Aorta (tissue), 5 donors: ENCODE measurements at regions of chr19 and their contacts with region 1.

Region 1: DNA sequence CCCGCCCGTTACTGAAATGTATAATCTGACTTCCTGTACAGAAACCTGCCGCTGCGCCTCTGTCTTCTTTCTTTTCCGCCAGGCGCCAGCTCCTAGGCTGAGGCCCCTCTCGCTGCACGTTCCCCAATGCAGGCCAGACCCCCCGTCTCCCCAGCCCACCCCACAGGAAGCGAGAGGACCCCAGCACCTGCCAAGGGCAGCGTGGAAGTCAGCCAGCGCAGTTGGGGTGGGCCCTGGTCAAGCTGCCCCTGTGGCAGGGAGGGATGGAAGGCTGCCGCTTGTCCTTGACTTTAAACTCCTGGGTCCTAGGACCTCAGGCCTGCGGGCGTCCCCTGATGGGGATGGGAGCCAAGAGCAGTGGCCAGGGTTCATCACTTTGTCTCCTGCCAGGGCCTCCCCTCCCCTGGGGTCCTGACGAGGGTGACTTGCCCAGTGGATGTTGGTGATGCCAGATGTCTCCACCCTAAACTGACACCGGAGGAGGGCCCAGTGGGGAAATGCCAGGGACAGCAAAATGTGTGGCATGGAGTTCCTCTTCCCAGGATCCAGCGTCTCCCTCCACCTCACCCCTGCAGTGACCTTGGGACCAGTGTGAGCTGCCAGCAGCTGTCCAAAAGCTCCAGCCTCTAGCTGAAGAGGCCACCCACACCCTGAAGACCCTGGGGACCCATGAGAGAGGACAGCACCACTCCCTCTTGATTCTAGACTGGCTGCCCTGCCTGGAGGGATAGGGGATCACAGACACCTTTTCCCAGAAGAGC is 8.5 kb upstream of the MARCHF2 start:
- DNase-seq: no peak
- ATAC-seq: no peak
- H3K4me3 ChIP-seq: no peak overlapping the region
- H3K27ac ChIP-seq: no peak overlapping the region
- H3K4me1 ChIP-seq: no peaks in the 10 kb centered on the region
- H3K27me3 ChIP-seq: no peaks in the 10 kb centered on the region

Region 2: DNA sequence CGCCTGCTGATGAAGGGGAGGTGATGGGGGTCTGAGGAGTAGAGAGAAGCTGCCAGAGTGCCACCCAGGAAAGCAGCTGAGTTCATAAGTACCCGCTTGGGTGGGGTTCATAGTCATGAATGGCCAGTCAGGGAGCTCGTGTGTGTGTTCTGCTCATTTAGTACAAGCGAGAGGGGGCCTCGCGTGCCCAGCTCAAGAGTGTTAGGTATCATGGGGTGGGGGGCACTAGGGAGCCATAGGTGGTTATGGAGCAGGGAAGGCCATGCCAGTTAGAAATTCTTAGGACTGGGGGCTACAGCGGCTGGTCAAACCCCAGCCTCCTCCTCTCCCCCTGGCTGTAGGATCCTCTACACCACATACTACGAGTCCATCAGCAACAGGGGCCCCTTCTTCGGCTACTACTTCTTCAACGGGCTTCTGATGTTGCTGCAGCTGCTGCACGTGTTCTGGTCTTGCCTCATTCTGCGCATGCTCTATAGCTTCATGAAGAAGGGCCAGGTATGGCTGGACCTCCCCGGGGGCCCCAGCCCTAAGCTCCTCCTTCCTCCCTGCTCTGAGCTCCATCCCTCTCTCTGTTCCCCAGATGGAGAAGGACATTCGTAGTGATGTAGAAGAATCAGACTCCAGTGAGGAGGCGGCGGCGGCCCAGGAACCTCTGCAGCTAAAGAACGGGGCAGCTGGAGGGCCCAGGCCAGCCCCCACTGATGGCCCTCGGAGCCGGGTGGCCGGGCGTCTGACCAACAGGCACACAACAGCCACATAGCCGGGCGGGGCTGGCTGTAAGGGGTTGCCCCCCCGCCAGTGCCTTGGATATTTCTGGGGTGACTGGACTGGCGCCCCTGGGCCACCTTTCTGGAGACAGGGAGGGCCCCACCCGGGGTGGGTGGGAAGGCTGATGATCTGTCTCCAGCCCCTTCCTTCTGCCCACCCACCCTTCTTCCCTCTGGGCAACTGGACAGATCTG is 142.9 kb before region 1 on chr19:
- intact Hi-C with region 1: loop called in 1 of 2 experiments (anchors 10 kb)
- DNase-seq: peak in 1 of 2 donors; percentile 70
- ATAC-seq: no peak
- H3K4me3 ChIP-seq: no peak overlapping the region
- H3K27ac ChIP-seq: no peak overlapping the region
- H3K4me1 ChIP-seq: no peaks in the 10 kb centered on the region
- H3K27me3 ChIP-seq: no peaks in the 10 kb centered on the region

Region 3: DNA sequence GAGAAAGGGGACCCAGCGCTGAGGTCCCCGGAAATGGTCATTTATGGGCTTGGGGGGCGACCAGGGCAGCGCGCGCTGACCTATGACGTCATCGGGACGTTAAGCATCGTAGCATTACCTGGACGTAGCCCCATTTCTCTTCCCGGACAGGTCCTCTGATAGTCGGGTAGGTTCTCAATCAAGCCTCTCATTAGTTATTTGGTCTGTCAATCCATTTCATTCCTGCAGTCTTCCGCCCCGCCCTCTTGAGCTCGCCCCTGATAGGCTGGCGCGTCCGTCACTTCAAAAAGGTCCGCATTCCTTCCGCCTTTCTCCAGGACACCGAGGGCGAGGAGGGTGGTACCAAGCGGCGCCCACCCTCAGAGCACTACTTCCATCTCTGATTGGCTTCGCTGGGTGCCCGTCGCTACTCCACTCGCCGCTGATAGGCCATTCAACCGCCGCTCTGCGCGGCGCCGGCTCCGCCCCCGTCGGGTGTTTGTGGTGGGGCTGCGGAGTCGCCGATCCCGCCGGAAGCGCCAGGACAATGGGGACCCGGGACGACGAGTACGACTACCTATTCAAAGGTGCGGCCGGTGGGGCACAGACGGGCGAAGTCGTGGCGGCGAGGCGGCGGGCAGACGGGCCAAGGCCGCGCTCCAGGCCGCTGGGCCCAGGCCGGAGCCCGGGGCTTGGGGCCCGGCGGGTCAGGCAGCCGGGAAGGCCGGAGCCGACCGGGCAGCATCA is 14.5 kb before region 1 on chr19 and contains the start of gene RAB11B:
- intact Hi-C with region 1: no loop called
- DNase-seq: peak; percentile 99 to 100
- ATAC-seq: peak; percentile 98
- H3K4me3 ChIP-seq: peak within 1 kb of the TSS; percentile 76 to 97
- H3K27ac ChIP-seq: peak within 1 kb of the TSS; percentile 80 to 100
- H3K4me1 ChIP-seq: no peaks in the 10 kb centered on the region
- H3K27me3 ChIP-seq: no peaks in the 10 kb centered on the region
- total RNA-seq, gene RAB11B: 119 TPM